Dorsolateral prefrontal cortex (tissue), 120 donors: ENCODE measurements at regions of chr6 and their contacts with region 1.

Region 1: GRCh38 chr6:53171605-53172446 is 23.2 kb upstream of the GCM1 start:
- DNase-seq: peak; percentile 86 to 93 (median 90)
- H3K4me3 ChIP-seq: no peak overlapping the region
- H3K27ac ChIP-seq: peak overlapping the region in 10 of 59 donors; percentile 9 to 65 (median 25)
- H3K27me3 ChIP-seq: no peaks in the 10 kb centered on the region
- CTCF ChIP-seq: peak; percentile 100

Region 2: DNA sequence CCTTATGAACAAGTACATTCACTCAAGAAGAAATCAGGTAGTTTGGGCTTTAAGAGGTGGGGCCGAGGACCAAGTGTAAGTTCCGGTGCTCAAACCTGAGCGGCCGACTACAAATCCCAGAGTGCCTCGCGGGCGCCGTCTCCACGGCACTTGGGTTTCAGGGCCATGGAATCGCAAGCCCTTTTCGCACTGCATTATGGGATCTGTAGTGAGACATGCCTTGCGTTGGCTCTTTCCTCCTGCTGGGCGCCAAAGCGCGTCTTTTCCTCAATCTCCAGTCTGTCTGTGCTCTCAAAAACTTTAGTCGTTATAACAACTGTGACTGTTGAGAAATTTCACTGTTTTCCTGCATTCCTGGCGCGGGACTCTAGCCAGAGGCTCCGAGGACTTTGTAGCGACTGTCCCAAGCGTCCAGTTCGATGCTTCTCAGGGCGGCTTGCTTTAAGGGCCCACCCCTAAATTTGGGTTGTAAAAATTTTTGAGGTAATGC is 107.1 kb before region 1 on chr6:
- intact Hi-C with region 1: no loop called
- DNase-seq: peak; percentile 95 to 99 (median 98)
- H3K4me3 ChIP-seq: peak overlapping the region; percentile 66 to 99 (median 93)
- H3K27ac ChIP-seq: peak overlapping the region; percentile 80 to 99 (median 96)
- H3K27me3 ChIP-seq: no peaks in the 10 kb centered on the region
- CTCF ChIP-seq: peak in 37 of 56 donors; percentile 3 to 57 (median 32)

Region 3: DNA sequence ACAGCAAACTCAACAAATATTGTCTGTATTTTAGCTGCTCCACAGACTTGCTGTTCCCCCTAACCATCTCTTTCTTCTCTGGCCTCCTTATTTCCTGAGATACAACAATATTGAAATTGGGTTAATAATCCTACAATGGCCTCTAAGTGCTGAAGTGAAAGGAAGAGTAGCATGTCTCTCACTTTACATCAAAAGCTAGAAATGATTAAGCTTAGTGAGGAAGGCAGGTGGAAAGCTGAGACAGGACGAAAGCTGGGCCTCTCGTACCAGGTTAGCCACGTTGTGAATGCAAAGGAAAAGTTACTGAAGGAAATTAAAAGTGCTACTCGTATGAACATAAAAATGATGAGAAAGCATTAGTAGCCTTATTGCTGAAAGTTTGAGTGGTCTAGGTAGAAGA is 113.1 kb after region 1 on chr6:
- intact Hi-C with region 1: loop called (anchors 5 to 10 kb)
- DNase-seq: no peak
- H3K4me3 ChIP-seq: no peak overlapping the region
- H3K27ac ChIP-seq: peak overlapping the region in 2 of 59 donors; percentile 5 to 27
- H3K27me3 ChIP-seq: no peaks in the 10 kb centered on the region
- CTCF ChIP-seq: no peak

Region 4: DNA sequence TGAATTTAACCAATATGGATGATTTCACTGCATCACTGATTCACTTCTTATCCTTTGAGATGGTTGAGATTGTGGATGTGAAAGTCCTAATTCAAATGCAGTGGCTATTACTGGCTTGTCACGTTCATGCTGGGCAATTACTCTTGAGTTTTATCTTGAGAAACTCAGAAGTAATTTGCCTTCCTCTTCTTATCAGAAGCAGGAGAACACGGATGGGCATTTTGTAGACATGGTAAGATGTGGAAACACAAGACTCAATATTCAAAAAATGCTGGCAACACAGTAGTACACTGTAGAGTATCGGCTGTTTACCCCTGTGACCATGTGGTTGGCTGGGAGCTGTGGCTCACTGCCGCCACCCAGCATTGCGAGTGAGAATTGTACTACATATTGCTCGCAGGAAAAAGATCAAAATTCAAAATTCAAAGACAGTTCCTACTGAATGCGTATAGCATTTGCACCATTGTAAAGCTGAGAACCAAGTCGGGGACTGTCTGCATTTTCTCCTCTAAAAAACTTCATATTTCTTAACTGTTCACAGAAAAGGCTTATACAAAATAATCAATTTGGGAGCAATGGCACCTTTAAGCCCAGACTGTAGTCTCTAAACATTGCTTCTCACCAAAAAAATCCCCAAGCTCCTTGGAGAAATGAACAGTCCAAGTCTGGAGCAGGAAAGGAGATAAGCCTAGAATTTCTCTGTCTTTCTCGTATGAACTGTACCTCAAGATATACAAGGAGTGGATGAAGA is 238.9 kb after region 1 on chr6:
- intact Hi-C with region 1: loop called in 1 of 2 experiments (anchors 5 kb)
- DNase-seq: peak in 4 of 10 donors; percentile 10 to 51 (median 35)
- H3K4me3 ChIP-seq: peak overlapping the region in 3 of 59 donors; percentile 1 to 21 (median 19)
- H3K27ac ChIP-seq: peak overlapping the region in 1 of 59 donors; percentile 0
- H3K27me3 ChIP-seq: peaks cover 0 to 7% (median 0%) of the 10 kb centered on the region in 45 donors
- CTCF ChIP-seq: peak; percentile 18 to 85 (median 64)

Region 5: DNA sequence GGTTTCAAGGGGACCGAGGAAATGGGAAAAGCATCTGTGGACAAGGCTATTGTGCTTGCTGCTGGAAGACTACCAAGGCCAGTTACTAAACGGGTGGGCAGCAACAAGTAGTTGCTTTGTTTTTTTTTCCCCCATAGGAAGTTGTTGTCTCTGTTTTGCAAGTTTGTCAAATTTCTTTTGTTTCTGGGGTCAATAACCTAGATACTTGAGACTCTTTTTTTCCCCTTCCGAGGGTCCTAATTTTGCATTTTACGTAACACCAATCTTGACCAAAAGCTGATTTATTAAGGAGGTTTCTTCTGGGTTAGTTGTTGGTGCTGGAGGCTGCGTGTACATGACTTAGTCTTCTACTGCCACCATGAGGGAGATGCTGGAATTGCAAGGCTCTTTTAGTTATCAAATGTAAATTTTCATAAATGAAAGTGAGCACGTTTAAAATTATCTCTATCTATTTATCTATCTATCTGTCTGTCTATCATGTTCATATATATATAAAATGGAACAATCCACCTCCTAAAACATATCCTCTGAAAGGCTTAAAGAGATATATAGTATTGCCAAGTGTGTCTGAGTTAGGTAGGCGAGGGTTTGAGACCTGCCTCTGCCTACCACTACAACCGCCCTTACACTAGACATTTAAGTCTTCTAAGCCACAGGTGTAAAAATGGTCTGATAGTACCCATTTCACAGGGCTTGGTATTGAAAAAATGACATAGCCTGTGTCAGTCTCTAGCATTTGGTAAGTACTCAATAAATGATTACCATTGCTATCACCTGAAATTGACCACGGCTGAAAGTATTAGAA is 312.9 kb after region 1 on chr6:
- intact Hi-C with region 1: loop called (anchors 1 to 2 kb)
- DNase-seq: peak in 6 of 10 donors; percentile 50 to 89 (median 66)
- H3K4me3 ChIP-seq: peak overlapping the region in 44 of 59 donors; percentile 1 to 59 (median 34)
- H3K27ac ChIP-seq: peak overlapping the region; percentile 16 to 95 (median 82)
- H3K27me3 ChIP-seq: no peaks in the 10 kb centered on the region
- CTCF ChIP-seq: peak; percentile 89 to 100 (median 98)

Region 6: DNA sequence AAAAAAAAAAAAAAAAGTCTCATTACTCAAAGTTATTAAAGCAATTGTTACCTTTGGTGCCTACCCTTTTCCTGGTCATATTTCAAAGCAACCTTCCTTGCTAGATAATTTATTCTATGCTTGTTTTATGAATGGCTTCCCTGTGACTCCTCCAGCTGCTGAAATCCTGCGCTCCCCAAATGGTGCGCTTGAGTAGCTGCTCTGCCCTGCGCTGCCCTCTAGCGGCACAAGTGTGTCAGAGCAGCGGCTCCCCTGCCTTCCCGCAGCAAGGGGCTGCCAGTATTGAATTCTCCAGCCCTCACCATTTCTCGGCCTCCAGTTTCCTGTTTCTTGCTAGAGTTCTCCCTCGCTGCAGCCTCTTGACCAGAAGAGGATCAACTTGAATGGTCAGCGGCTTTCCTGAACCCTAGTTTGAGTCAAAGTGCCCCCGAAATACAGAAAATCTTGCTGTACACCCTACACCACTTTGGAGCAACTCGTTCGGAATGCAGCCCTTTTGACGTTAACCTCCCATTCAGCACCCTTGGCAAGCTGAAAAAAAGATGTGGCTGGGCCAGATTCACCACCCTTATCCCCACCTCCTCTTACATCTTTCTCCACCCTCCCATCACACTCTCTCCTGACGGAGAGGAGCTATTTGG is 554.1 kb after region 1 on chr6:
- intact Hi-C with region 1: loop called (anchors 5 to 10 kb)
- DNase-seq: peak; percentile 64 to 87 (median 76)
- H3K4me3 ChIP-seq: no peak overlapping the region
- H3K27ac ChIP-seq: no peak overlapping the region
- H3K27me3 ChIP-seq: peaks cover 0 to 4% (median 0%) of the 10 kb centered on the region in 45 donors
- CTCF ChIP-seq: peak; percentile 69 to 98 (median 95)